ENCODE measurements at regions of chr14 and their contacts with region 1.

Region 1: GRCh38 chr14:69766984-69767368 is at the start of gene SRSF5:
- DNase-seq: peak; percentile 94
- ATAC-seq: peak; percentile 92
- H3K4me3 ChIP-seq: peak within 1 kb of the TSS; percentile 96 to 99 (median 99)
- H3K27ac ChIP-seq: peak within 1 kb of the TSS; percentile 99
- H3K4me1 ChIP-seq: peaks cover 48% of the 10 kb centered on the region
- H3K27me3 ChIP-seq: no peaks in the 10 kb centered on the region; a peak in 1 of 5 replicates
- CTCF ChIP-seq: 0 out of 2 replicates have a peak, but pooled peaks have one; percentile 18
- EP300 ChIP-seq: 0 out of 4 replicates have a peak, but pooled peaks of 1 of the 2 experiments have one; percentile 30
- POLR2A ChIP-seq: peak; percentile 99 to 100
- RAD21 ChIP-seq: peak; percentile 25; the same call in 1 of the 2 replicates
- total RNA-seq, gene SRSF5: 277 and 333 TPM in 2 replicates

Region 2: GRCh38 chr14:69506241-69506595 is 260.8 kb before region 1 on chr14:
- CTCF ChIA-PET with region 1: no interaction called
- POLR2A ChIA-PET with region 1: no interaction called
- in situ Hi-C with region 1: no loop called
- intact Hi-C with region 1: no loop called
- DNase-seq: no peak
- ATAC-seq: no peak; the same call in 2 of the 3 replicates
- H3K4me3 ChIP-seq: no peak overlapping the region
- H3K27ac ChIP-seq: no peak overlapping the region
- H3K4me1 ChIP-seq: peaks cover 15% of the 10 kb centered on the region
- H3K27me3 ChIP-seq: peaks cover 0 to 2% of the 10 kb centered on the region in 2 experiments; a peak in 2 of 5 replicates
- CTCF ChIP-seq: no peak
- EP300 ChIP-seq: no peak
- POLR2A ChIP-seq: no peak
- RAD21 ChIP-seq: no peak

Region 3: DNA sequence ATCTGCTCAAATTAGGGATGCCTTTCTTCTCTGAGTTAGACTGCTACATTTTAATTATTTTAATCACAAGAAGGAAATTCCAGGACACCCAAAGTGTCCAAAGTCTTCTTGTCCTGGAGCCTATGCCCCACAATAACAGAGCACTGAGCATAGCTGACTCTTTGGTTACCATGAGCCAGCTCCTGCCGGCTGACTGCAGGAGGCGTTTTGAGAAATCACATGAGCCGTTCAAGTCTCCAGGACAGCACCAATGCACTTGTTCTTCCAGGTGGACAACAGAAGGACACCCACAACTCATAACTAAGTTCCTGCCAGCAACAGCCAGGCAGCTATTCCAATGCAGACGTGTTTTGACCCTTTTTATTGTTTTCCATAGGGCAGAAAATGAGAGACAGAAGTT is 46.1 kb before region 1 on chr14:
- CTCF ChIA-PET with region 1: no interaction called
- POLR2A ChIA-PET with region 1: no interaction called
- in situ Hi-C with region 1: no loop called
- intact Hi-C with region 1: no loop called
- DNase-seq: no peak
- ATAC-seq: peak; percentile 43; the same call in 2 of the 3 replicates
- H3K4me3 ChIP-seq: no peak overlapping the region
- H3K27ac ChIP-seq: no peak overlapping the region
- H3K4me1 ChIP-seq: peaks cover 31% of the 10 kb centered on the region
- H3K27me3 ChIP-seq: peaks cover 0 to 2% of the 10 kb centered on the region in 2 experiments; a peak in 1 of 5 replicates
- CTCF ChIP-seq: no peak
- EP300 ChIP-seq: no peak
- POLR2A ChIP-seq: no peak
- RAD21 ChIP-seq: no peak

Region 4: GRCh38 chr14:69749956-69750355 is 17.0 kb before region 1 on chr14:
- CTCF ChIA-PET with region 1: no interaction called
- POLR2A ChIA-PET with region 1: interaction called, 26 read pairs
- in situ Hi-C with region 1: no loop called
- intact Hi-C with region 1: no loop called
- DNase-seq: peak; percentile 76
- ATAC-seq: peak; percentile 94
- H3K4me3 ChIP-seq: peak overlapping the region in 1 of 3 experiments; percentile 44; a peak in 2 of 6 replicates
- H3K27ac ChIP-seq: peak overlapping the region; percentile 22
- H3K4me1 ChIP-seq: peaks cover 82% of the 10 kb centered on the region
- H3K27me3 ChIP-seq: no peaks in the 10 kb centered on the region
- CTCF ChIP-seq: no peak
- EP300 ChIP-seq: no peak
- POLR2A ChIP-seq: no peak
- RAD21 ChIP-seq: no peak

Region 5: GRCh38 chr14:69780952-69781351 is 14.0 kb after region 1 on chr14:
- CTCF ChIA-PET with region 1: no interaction called
- POLR2A ChIA-PET with region 1: interaction called, 24 read pairs
- in situ Hi-C with region 1: no loop called
- intact Hi-C with region 1: no loop called
- DNase-seq: no peak
- ATAC-seq: no peak
- H3K4me3 ChIP-seq: no peak overlapping the region
- H3K27ac ChIP-seq: peak overlapping the region; percentile 40
- H3K4me1 ChIP-seq: peaks cover 47% of the 10 kb centered on the region
- H3K27me3 ChIP-seq: no peaks in the 10 kb centered on the region
- CTCF ChIP-seq: no peak
- EP300 ChIP-seq: no peak
- POLR2A ChIP-seq: no peak
- RAD21 ChIP-seq: no peak

Region 6: GRCh38 chr14:69812714-69813113 is 45.7 kb after region 1 on chr14:
- CTCF ChIA-PET with region 1: no interaction called
- POLR2A ChIA-PET with region 1: interaction called, 47 read pairs
- in situ Hi-C with region 1: no loop called
- intact Hi-C with region 1: no loop called
- DNase-seq: peak; percentile 43
- ATAC-seq: no peak
- H3K4me3 ChIP-seq: no peak overlapping the region
- H3K27ac ChIP-seq: no peak overlapping the region
- H3K4me1 ChIP-seq: peaks cover 60% of the 10 kb centered on the region
- H3K27me3 ChIP-seq: no peaks in the 10 kb centered on the region
- CTCF ChIP-seq: peak; percentile 68
- EP300 ChIP-seq: no peak
- POLR2A ChIP-seq: no peak
- RAD21 ChIP-seq: peak; percentile 47; the same call in 1 of the 2 replicates

Region 7: DNA sequence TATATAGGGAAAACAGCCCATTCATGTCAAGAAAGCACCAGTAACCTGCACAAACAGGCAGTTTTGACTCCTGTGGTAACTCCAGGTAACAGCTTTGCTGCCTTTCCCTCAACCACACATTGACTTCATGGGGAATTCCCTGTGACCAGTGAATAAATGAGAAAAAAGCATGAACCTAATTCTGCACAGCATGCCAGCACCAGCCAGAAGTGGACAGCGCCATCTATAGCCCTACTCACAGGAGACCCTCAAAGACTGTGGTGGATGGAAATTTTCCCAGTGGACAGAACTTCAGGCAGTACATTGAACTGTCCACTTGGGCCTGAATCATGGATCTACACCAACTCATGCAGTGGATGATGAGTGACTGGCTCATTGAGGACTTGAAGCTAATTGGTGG is 269.7 kb after region 1 on chr14:
- CTCF ChIA-PET with region 1: no interaction called
- POLR2A ChIA-PET with region 1: no interaction called
- in situ Hi-C with region 1: no loop called
- intact Hi-C with region 1: no loop called
- DNase-seq: peak; percentile 42
- ATAC-seq: peak; percentile 72
- H3K4me3 ChIP-seq: no peak overlapping the region
- H3K27ac ChIP-seq: no peak overlapping the region
- H3K4me1 ChIP-seq: peaks cover 17% of the 10 kb centered on the region
- H3K27me3 ChIP-seq: 0 out of 5 replicates have a peak, but pooled peaks cover 0 to 1% of the 10 kb centered on the region in 2 experiments
- CTCF ChIP-seq: peak; percentile 45
- EP300 ChIP-seq: no peak
- POLR2A ChIP-seq: no peak
- RAD21 ChIP-seq: no peak